ENCODE measurements at regions of chr22 and their contacts with region 1.

Region 1: DNA sequence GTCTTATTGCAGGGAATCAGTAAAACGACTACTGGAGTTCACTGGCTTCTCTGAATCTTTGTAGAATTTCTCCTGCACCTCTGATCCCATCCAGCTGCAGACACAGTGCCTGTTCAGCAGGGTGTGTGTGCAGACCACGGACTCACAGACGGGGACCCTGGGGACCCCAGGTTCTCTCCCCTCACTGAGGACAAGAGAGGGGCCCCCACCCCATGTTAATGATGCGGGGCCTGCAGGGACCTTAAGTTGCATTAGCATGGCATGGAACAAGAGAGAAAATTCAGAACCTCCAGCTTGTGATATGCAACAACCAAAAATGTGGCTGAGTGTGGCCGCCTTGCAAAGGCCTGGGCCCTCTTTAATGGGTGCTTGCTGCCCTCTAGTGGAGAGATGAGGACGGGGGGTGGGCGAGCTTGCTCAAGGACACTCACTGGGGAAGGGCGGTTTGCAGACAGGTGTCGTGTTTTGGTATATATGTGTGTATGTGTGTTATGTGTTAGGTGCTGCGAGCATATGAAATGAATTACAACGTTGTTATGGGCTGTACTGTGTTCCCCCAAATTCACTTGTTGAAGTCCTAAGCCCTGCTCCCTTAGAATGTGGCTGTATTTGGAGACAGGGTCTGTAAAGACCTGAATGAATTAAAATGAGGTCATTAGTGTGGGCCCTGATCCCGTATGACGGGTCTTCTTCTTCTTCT is 84.4 kb upstream of the SEPTIN5 start:
- DNase-seq: peak; percentile 70 to 84
- ATAC-seq: peak; percentile 85 to 92; a peak in 5 of 6 replicates
- H3K4me3 ChIP-seq: no peak overlapping the region
- H3K27ac ChIP-seq: no peak overlapping the region
- H3K4me1 ChIP-seq: no peaks in the 10 kb centered on the region
- CTCF ChIP-seq: peak; percentile 66
- EP300 ChIP-seq: no peak
- POLR2A ChIP-seq: no peak
- RAD21 ChIP-seq: peak; percentile 88 to 93

Region 2: DNA sequence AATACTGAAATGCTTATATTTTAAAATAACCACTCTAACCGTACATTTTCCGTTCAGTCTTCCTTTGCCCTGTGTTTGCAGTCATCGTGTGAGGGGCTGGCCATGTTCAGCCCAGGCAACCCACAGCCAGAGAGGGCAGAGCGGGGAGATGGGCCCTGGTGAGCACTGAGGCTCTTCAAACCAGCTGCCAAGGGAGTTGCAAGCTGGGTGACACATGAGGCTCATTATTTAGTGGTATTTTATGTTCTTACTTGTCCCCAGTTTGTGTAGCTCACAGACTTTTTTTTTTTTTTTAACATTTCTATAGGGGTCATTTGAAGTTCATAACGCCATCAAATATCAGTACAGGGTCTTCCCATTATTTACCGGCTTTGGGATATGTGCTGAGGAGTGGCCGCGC is 741.8 kb before region 1 on chr22:
- CTCF ChIA-PET with region 1: no interaction called
- POLR2A ChIA-PET with region 1: no interaction called
- DNase-seq: no peak
- ATAC-seq: no peak
- H3K4me3 ChIP-seq: no peak overlapping the region
- H3K27ac ChIP-seq: no peak overlapping the region
- H3K4me1 ChIP-seq: no peaks in the 10 kb centered on the region
- CTCF ChIP-seq: no peak
- EP300 ChIP-seq: no peak
- POLR2A ChIP-seq: no peak
- RAD21 ChIP-seq: no peak

Region 3: DNA sequence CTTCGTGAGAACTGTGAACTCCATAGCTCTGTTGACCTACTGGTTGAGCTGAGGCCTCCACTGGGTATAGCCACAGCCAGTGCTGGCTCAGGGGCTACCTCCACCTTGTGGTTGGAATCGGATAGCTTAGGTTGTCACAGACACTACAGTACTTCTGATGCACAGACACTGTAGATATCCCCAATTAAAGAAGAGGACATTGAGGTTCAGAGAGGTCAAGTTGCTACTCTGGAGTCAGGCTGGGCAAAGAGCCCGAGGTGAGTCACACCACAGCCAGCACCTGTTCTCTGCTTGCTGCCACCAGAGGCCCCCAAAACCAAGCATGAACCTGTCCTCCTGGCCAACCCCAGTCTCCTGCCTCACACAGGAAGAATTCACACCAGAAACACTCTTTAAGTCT is 156.3 kb before region 1 on chr22:
- CTCF ChIA-PET with region 1: interaction called, 24 read pairs
- POLR2A ChIA-PET with region 1: no interaction called
- DNase-seq: peak in 1 of 2 experiments; percentile 6
- ATAC-seq: peak; percentile 41 to 70; a peak in 3 of 6 replicates
- H3K4me3 ChIP-seq: no peak overlapping the region
- H3K27ac ChIP-seq: no peak overlapping the region
- H3K4me1 ChIP-seq: peaks cover 7% of the 10 kb centered on the region
- CTCF ChIP-seq: no peak
- EP300 ChIP-seq: no peak
- POLR2A ChIP-seq: no peak
- RAD21 ChIP-seq: no peak

Region 4: DNA sequence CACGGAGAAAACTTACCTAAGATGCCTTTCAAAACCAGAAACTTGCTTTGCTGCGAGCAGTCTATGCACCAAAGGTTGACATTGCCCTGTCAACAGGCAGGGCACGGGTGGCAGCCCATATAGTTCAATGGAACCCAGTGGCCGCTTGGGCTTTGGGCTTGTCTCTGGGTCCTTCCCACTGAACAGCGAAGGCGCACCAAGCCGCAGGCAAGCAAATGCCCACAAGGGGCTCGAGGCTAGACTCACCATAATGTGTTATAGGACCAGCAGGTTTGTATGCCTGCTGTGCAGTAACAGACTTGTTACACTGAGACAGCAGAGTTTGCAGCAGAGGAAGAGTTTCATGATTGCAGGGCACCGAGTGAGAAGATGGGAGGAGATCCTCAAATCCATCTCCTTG is 126.0 kb before region 1 on chr22:
- CTCF ChIA-PET with region 1: interaction called, 11 read pairs
- POLR2A ChIA-PET with region 1: no interaction called
- DNase-seq: no peak
- ATAC-seq: peak; percentile 50 to 68; a peak in 3 of 6 replicates
- H3K4me3 ChIP-seq: no peak overlapping the region
- H3K27ac ChIP-seq: no peak overlapping the region
- H3K4me1 ChIP-seq: no peaks in the 10 kb centered on the region
- CTCF ChIP-seq: no peak
- EP300 ChIP-seq: no peak
- POLR2A ChIP-seq: no peak
- RAD21 ChIP-seq: no peak

Region 5: GRCh38 chr22:19619144-19620009 is 10.5 kb before region 1 on chr22:
- CTCF ChIA-PET with region 1: interaction called, 26 read pairs
- POLR2A ChIA-PET with region 1: no interaction called
- DNase-seq: no peak
- ATAC-seq: no peak
- H3K4me3 ChIP-seq: no peak overlapping the region
- H3K27ac ChIP-seq: no peak overlapping the region
- H3K4me1 ChIP-seq: no peaks in the 10 kb centered on the region
- CTCF ChIP-seq: no peak
- EP300 ChIP-seq: no peak
- POLR2A ChIP-seq: no peak
- RAD21 ChIP-seq: no peak

Region 6: GRCh38 chr22:19648419-19648929 is 18.6 kb after region 1 on chr22:
- CTCF ChIA-PET with region 1: interaction called, 13 read pairs
- POLR2A ChIA-PET with region 1: no interaction called
- DNase-seq: no peak
- ATAC-seq: no peak
- H3K4me3 ChIP-seq: no peak overlapping the region
- H3K27ac ChIP-seq: no peak overlapping the region
- H3K4me1 ChIP-seq: no peaks in the 10 kb centered on the region
- CTCF ChIP-seq: no peak
- EP300 ChIP-seq: no peak
- POLR2A ChIP-seq: no peak
- RAD21 ChIP-seq: no peak

Region 7: DNA sequence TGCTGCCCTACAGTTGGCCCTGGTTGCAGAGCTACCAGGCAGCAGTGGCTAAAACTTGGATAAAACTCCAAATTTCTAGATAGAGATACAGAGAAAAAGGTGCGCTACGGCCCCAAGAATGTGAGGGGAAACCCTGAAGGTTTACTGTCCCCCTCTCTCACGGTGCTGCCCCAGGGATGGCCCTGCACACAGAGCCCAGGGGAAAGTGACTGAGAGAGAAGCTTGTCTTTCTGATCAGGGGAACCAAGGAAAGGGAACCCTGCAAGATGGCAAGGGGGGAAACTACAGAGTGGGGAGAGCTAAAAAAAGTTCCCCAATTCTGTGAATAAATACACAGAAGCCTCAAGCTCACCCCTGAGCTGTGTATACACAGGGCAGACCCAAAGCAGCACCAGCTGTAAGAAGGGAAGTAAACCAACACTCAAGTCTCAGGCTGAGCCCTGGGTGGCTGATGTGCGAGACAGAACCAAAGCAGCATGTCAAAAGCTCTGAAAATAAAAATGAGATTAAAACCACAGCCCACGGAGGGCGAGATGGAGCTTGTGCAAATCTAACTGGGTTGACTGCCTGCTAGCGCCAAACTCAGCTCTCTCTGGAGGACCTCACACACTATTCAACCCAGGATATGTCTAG is 202.7 kb after region 1 on chr22:
- CTCF ChIA-PET with region 1: no interaction called
- POLR2A ChIA-PET with region 1: no interaction called
- DNase-seq: no peak
- ATAC-seq: no peak
- H3K4me3 ChIP-seq: no peak overlapping the region
- H3K27ac ChIP-seq: no peak overlapping the region
- H3K4me1 ChIP-seq: no peaks in the 10 kb centered on the region
- CTCF ChIP-seq: no peak
- EP300 ChIP-seq: no peak
- POLR2A ChIP-seq: no peak
- RAD21 ChIP-seq: no peak

Measured in A549 (cell line).